OCI-LY7 (cell line): ENCODE measurements at regions of chr1 and their contacts with region 1.

Region 1: GRCh38 chr1:15741183-15741850 is 982 bp upstream of the TMEM82 start:
- DNase-seq: peak; percentile 81
- H3K4me3 ChIP-seq: no peak overlapping the region
- H3K27ac ChIP-seq: no peak overlapping the region
- H3K4me1 ChIP-seq: no peaks in the 10 kb centered on the region
- CTCF ChIP-seq: peak; percentile 92

Region 2: DNA sequence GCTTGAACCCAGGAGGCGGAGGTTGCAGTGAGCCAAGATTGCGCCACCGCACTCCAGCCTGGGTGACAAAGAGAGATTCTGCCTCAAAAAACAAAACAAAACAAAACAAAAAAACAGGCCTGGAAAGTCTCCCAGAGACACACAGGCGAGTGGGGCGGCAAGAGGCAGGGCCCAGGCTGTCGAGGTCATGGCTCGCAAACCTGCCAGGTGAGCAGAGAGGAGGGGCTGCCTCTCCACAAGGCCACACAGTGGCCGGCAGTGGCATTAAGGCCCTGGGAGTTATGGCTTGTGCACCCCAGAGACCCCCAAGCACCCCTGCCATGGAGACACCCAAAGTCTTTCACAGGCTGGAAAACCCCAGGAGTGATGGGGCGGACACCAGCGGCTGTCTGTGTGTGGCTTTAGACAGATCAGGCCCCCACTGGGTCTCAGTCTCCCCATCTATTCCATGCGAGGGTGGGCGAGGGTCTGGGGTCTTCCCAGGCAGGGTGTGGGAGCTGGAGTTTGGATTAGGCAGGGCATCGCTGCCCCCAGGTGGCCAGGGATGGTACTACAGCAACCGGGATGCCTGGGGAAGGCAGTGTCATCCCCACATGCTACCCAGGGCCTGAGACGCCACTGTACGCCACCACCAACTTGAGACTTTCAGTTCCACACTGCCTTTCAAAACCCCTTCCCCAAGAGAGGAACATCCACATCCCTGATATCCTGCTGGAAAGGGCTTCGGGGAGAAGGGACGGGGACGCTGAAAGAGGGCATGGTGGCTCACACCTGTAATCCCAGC is 310.3 kb before region 1 on chr1:
- CTCF ChIA-PET with region 1: no interaction called
- POLR2A ChIA-PET with region 1: no interaction called
- intact Hi-C with region 1: loop called (anchors 5 kb)
- DNase-seq: peak; percentile 55
- H3K4me3 ChIP-seq: no peak overlapping the region
- H3K27ac ChIP-seq: no peak overlapping the region
- H3K4me1 ChIP-seq: no peaks in the 10 kb centered on the region
- CTCF ChIP-seq: peak; percentile 96

Region 3: GRCh38 chr1:15501208-15502032 is 239.9 kb before region 1 on chr1:
- CTCF ChIA-PET with region 1: no interaction called
- POLR2A ChIA-PET with region 1: no interaction called
- intact Hi-C with region 1: loop called (anchors 2 kb)
- DNase-seq: peak; percentile 69
- H3K4me3 ChIP-seq: no peak overlapping the region
- H3K27ac ChIP-seq: no peak overlapping the region
- H3K4me1 ChIP-seq: no peaks in the 10 kb centered on the region
- CTCF ChIP-seq: peak; percentile 94

Region 4: DNA sequence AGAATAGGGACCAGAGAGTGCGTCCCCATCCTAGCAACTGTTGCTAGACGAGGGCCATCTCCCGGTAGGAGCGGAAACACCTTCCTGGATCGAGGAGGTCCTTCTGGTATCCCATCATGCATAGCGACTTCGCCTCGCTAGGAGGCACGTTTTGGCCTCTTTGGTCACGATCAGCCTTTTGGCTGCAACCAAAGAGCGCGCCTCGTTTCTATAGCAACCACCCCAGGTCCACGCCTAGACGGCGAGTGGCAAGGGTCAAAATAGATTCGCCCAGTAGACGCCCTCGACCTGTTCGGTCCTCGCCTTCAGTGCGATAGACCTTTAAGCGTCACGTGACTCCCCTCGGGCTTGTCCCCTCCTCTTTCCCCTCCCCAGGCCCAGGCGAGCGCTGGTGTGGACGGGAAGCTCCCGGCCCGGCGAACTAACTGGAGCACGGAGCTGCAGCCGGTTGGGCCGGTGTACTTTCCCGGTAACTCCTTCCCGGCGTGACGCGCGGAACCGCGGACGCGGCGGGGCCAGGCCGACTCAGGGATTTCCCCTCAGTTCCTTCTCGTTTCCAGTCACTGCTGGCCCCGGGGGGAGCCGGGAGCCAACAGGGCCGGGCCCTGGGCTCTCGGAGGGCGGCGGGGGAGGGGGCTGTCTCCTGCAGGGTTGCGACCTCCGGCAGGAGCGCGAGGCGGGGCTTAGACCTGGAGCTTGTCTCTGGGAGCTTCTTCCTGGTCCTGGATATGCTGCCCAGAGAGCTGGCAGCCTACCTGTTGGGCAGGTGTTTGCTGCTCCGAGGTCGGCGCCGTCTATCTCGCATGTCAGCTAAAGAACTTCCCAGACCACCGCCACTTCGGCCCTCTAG is 214.6 kb before region 1 on chr1 and contains the start of gene DNAJC16:
- CTCF ChIA-PET with region 1: no interaction called
- POLR2A ChIA-PET with region 1: no interaction called
- intact Hi-C with region 1: loop called (anchors 2 kb)
- DNase-seq: peak; percentile 100
- H3K4me3 ChIP-seq: peak within 1 kb of the TSS; percentile 83
- H3K27ac ChIP-seq: peak within 1 kb of the TSS; percentile 62
- H3K4me1 ChIP-seq: peaks cover 22% of the 10 kb centered on the region
- CTCF ChIP-seq: no peak; the same call in 1 of the 2 replicates
- total RNA-seq, gene DNAJC16: 5.8 and 9.1 TPM in 2 replicates

Region 5: DNA sequence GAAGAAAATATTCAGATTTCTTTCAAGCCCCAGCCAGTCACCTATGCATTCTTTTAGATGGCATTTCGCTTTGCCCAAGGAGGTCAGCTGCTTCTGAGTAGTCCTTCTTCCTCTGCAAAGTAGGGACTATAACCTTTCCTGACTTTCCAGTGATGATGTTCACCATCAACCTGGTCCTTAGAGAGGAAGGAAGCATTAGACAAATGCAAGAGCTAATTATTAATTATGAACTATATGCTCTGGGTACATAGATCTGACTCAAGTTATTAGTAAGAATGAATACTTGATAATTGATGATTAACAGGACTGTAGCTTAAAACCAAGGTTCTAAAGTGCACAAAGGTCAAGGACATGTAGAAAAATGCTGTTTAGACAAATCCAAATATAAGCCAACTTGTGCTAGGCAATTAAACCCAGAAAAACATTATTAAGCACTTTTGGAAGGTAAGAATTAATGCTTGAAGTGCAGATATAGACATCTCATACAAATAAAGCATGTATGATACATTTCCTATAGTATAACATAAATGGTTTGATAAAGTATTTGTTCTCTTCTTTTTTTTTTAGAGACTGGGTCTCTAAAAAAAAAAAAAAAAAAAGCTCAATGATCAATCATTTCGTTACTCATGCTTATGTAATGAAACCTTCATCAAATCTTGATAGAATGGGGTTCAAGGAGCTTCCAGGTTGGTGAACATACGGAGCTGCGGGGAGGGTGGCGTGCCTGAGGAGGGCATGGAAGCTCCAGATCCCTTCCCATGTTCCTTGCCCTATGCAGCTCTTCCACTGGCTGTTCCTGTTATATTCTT is 145.3 kb before region 1 on chr1:
- CTCF ChIA-PET with region 1: no interaction called
- POLR2A ChIA-PET with region 1: interaction called, 4 read pairs
- intact Hi-C with region 1: loop called (anchors 1 kb)
- DNase-seq: no peak
- H3K4me3 ChIP-seq: no peak overlapping the region
- H3K27ac ChIP-seq: no peak overlapping the region
- H3K4me1 ChIP-seq: no peaks in the 10 kb centered on the region
- CTCF ChIP-seq: no peak

Region 6: DNA sequence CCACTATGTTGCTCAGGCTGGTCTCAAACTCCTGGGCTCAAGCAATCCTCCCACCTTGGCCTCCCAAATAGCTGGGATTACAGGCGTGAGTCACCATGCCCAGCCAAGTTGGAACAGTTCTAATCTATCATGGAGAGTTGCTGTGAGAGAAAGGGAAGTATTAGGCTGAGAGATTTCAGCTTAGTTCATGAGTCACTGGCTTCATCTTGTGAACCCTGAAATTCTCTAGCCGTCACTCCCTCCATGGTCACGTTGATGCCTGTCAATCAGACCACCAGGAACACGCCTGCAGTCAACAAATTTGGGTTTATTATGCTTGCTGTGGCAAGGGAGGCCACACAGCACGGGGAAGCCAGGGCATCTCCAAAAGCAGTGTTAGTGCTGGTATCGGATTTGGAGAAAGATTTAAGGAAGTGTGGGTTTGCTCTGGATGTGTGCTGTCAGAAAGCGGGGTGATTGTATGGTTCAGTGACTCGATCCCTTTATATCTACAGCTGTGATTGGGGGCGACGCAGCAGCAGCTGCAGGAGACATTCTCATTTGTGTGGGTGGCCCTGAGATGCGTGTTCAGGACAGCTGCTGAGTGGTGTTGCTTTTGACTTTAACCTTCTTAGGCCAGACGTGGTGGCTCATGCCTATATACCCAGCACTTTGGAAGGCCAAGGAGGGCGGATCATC is 47.4 kb after region 1 on chr1:
- CTCF ChIA-PET with region 1: no interaction called
- POLR2A ChIA-PET with region 1: no interaction called
- intact Hi-C with region 1: no loop called
- DNase-seq: no peak
- H3K4me3 ChIP-seq: no peak overlapping the region
- H3K27ac ChIP-seq: no peak overlapping the region
- H3K4me1 ChIP-seq: no peaks in the 10 kb centered on the region
- CTCF ChIP-seq: no peak